Lower lobe of right lung (tissue), 2 donors: ENCODE measurements at regions of chr2 and their contacts with region 1.

Region 1: DNA sequence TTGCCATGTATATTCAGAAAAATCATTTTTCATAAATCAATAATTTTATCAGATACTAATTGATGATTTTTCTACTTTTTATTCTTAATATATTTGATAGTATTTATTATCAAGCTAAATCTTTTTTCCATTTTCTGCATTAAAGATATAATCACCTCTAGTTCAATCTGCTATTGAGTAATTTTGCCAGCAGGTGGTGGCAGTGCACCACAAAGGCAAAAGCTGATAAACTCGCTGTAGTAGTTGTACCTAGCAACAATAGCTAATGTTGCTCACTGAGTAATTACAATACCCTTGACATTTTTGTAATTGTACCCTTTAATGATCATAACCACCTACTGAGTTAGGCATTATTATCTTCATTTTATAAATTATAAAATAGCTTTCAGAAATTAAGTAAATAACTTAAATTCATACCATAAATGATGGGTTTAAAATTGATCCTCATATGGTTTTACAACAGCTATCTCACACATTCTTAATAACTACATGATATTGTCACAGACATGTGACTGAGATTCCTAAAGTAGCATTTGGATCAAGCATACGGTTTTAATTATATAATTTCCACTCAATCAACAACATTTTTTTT is 52.0 kb upstream of the CALCRL start:
- DNase-seq: no peak
- ATAC-seq: peak; percentile 84 to 91
- H3K4me3 ChIP-seq: no peak overlapping the region
- H3K27ac ChIP-seq: no peak overlapping the region
- H3K4me1 ChIP-seq: peaks cover 30% of the 10 kb centered on the region
- H3K27me3 ChIP-seq: no peaks in the 10 kb centered on the region
- CTCF ChIP-seq: peak; percentile 87

Region 2: DNA sequence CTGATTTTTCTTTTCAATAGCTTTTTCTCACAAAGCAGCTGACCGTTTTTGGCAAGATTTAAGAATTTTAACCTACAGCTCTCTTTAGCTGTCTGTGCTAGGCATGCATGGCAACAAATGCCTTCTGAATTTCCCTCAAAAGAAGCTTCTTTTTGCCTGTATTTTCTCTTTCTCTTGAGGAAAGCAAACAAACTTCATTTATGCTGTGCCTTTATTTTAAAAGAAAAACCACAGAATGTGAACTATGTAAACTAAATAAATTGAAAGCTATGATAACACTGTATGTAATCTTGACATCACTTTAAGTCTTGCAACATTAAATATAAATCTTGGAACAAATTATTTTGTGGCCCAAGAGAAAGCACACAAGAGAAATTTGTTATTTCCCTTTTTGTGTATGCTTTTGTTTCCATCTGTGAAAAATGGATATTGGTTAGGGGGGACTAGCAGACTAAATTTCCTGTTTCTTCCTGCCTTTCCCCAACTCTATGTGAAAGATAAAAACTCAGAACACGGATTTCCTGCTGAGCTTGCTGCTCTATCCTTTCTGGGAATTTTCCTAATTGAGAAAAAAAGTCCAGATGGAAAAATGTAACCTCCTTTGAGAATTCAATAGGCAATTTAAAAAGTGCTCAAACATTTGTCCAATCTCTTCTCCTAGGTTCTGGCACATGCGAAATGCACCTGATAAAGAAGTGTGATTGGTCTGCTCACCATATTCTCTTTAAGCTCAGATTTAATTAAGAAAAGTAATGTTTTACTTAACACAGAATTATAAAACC is 75.1 kb after region 1 on chr2:
- intact Hi-C with region 1: loop called (anchors 5 kb)
- DNase-seq: no peak
- ATAC-seq: peak in 1 of 2 donors; percentile 66
- H3K4me3 ChIP-seq: no peak overlapping the region
- H3K27ac ChIP-seq: peak overlapping the region; percentile 32
- H3K4me1 ChIP-seq: peaks cover 27% of the 10 kb centered on the region
- H3K27me3 ChIP-seq: no peaks in the 10 kb centered on the region
- CTCF ChIP-seq: no peak

Region 3: DNA sequence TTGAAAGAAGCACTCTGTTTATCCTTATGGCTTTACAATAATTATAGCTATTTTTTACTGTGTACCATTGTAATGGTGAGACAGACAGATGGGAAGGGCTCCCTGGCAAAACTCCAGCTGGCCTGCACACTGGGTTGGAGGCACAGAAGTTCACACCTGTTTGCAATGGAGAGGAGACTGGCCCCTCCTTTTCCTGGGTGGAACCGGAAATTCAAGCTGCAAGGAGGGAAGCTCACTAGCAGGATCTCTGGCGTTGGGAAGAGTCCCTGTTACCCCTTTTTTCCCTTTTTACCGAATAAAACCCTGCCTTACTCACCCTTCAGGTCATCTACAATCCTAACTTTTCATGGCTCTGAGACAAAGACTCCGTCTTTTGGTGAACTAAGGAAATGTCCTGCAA is 154.5 kb after region 1 on chr2:
- intact Hi-C with region 1: no loop called
- DNase-seq: no peak
- ATAC-seq: no peak
- H3K4me3 ChIP-seq: no peak overlapping the region
- H3K27ac ChIP-seq: no peak overlapping the region
- H3K4me1 ChIP-seq: no peaks in the 10 kb centered on the region
- H3K27me3 ChIP-seq: no peaks in the 10 kb centered on the region
- CTCF ChIP-seq: no peak

Region 4: GRCh38 chr2:188003800-188004199 is 503.8 kb after region 1 on chr2:
- intact Hi-C with region 1: no loop called
- DNase-seq: no peak
- ATAC-seq: no peak
- H3K4me3 ChIP-seq: no peak overlapping the region
- H3K27ac ChIP-seq: no peak overlapping the region
- H3K4me1 ChIP-seq: no peaks in the 10 kb centered on the region
- H3K27me3 ChIP-seq: no peaks in the 10 kb centered on the region
- CTCF ChIP-seq: no peak